CD8-positive, alpha-beta T cell (primary cell): ENCODE measurements at regions of chr9 and their contacts with region 1.

Region 1: DNA sequence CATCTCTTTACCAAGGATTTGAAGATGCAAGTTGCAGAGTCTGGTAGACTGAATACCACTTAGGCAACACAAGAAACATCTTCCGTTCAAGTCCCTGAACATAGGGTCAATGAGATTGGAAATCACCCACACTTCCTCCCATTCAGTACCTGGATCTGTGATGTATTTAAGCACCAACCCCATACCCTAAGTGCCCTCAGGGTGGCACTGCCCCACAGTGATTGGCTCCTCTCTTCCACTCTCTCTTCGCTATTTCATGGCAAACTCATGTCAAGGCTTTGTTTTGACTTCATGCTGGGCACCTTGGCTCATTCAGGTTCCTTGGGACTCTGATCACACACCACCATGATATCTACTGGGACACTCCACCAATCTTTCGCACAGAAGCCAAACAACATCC is 53.7 kb downstream of the GGTA1 start:
- DNase-seq: peak in 2 of 9 experiments; percentile 3 to 9
- ATAC-seq: no peak
- H3K4me3 ChIP-seq: no peak overlapping the region
- H3K4me3 Mint-ChIP-seq: no peak overlapping the region
- H3K27ac ChIP-seq: no peak overlapping the region
- H3K27ac Mint-ChIP-seq: no peak overlapping the region
- H3K4me1 ChIP-seq: no peaks in the 10 kb centered on the region
- H3K4me1 Mint-ChIP-seq: peaks cover 6% of the 10 kb centered on the region
- H3K27me3 ChIP-seq: no peaks in the 10 kb centered on the region
- H3K27me3 Mint-ChIP-seq: peaks cover 15% of the 10 kb centered on the region
- CTCF ChIP-seq: no peak

Region 2: GRCh38 chr9:121169094-121169601 is 276.8 kb before region 1 on chr9:
- CTCF ChIA-PET with region 1: no interaction called
- POLR2A ChIA-PET with region 1: no interaction called
- intact Hi-C with region 1: no loop called
- DNase-seq: peak in 5 of 9 experiments; percentile 16 to 69 (median 39)
- ATAC-seq: peak; percentile 89
- H3K4me3 ChIP-seq: no peak overlapping the region
- H3K4me3 Mint-ChIP-seq: no peak overlapping the region
- H3K27ac ChIP-seq: peak overlapping the region; percentile 16 to 49
- H3K27ac Mint-ChIP-seq: peak overlapping the region; percentile 83
- H3K4me1 ChIP-seq: peaks cover 20% of the 10 kb centered on the region
- H3K4me1 Mint-ChIP-seq: peaks cover 23% of the 10 kb centered on the region
- H3K27me3 ChIP-seq: no peaks in the 10 kb centered on the region
- H3K27me3 Mint-ChIP-seq: no peaks in the 10 kb centered on the region
- CTCF ChIP-seq: peak; percentile 57

Region 3: DNA sequence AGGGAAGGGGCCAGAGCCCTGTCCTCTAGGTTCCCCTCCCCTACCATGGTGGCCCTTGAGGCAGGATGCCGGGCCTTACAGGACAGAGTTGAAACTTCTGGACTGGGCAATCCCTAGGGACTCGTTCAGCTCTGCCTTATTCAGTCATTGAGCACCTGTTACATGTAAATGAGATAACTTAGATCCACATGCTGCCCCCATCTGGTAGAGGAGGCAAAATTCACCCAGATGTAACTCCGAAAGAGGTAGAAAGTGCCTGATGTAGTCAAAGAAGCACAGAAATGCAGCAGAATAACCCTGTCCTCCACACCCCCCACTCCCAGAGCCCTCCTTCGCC is 52.1 kb after region 1 on chr9:
- CTCF ChIA-PET with region 1: interaction called, 3 read pairs
- POLR2A ChIA-PET with region 1: no interaction called
- intact Hi-C with region 1: loop called in 1 of 2 experiments (anchors 1 kb)
- DNase-seq: peak in 6 of 9 experiments; percentile 12 to 58 (median 40)
- ATAC-seq: peak; percentile 44
- H3K4me3 ChIP-seq: peak overlapping the region in 1 of 2 experiments; percentile 47
- H3K4me3 Mint-ChIP-seq: peak overlapping the region; percentile 76
- H3K27ac ChIP-seq: no peak overlapping the region
- H3K27ac Mint-ChIP-seq: no peak overlapping the region
- H3K4me1 ChIP-seq: peaks cover 13% of the 10 kb centered on the region
- H3K4me1 Mint-ChIP-seq: peaks cover 21% of the 10 kb centered on the region
- H3K27me3 ChIP-seq: peaks cover 16 to 18% of the 10 kb centered on the region in 2 experiments
- H3K27me3 Mint-ChIP-seq: peaks cover 45% of the 10 kb centered on the region
- CTCF ChIP-seq: peak; percentile 27